KBM-7 (cell line): ENCODE measurements at regions of chr4 and their contacts with region 1.

Region 1: GRCh38 chr4:154618708-154619315 is 6.4 kb upstream of the FGG start:
- DNase-seq: peak; percentile 70

Region 2: DNA sequence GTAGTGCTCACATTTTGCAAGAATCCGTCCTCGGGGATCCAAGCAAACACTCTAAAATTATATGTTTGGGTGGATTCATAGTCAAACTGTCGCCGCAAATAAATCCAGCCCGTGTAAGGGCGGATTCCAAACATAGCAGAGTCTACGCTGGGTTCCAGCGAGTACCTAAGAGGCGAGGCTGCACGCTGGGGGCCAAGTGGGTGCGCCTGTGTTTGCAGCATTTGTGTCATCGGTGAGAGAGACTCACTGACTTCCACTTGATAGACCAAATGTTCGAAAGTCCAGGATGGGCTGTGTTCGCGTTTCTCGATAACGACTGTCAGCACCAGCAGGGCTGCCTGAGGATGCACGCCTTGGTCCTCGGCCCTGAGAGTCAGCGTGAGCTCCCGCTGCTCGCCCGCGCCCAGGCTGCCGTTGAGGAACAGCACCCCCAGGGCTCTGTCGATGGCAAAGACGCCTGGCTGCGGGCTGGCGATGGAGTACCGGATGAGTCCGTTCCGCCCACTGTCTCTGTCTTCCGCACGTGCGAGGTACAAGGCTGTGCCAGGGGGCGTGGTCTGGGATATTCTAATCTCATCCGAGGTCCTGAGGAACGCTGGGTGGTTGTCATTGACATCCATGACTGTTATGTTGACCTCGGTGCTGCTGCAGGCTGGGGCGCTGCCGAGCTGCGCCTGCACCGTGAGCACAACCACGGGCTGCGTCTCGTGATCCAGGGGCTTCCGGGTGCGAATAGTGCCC is 286.0 kb before region 1 on chr4:
- in situ Hi-C with region 1: loop called (anchors 25 kb)
- DNase-seq: no peak

Region 3: DNA sequence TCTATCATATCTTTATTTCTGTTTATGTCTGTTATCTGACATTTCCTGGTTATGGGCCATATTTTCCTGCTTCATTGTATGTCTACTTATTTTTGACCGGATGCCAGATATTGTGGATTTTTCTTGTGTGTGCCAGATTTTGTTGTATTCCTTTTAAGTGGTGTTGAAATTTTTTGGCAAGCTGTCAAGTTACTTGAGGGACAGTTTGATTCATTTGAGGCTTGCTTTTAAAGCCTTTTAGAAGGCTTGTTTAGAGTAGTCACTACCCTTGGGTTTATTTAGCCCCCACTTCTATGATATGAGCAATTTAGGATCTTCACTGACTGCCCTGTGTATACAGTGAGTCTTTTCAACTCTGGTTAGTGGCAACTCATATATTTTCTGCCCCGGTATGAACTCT is 560.4 kb after region 1 on chr4:
- in situ Hi-C with region 1: no loop called
- DNase-seq: no peak